Left cardiac atrium (tissue), 4 donors: ENCODE measurements at regions of chr7 and their contacts with region 1.

Region 1: GRCh38 chr7:136874238-136875032 is 6.0 kb downstream of the CHRM2 start:
- DNase-seq: no peak
- ATAC-seq: no peak

Region 2: DNA sequence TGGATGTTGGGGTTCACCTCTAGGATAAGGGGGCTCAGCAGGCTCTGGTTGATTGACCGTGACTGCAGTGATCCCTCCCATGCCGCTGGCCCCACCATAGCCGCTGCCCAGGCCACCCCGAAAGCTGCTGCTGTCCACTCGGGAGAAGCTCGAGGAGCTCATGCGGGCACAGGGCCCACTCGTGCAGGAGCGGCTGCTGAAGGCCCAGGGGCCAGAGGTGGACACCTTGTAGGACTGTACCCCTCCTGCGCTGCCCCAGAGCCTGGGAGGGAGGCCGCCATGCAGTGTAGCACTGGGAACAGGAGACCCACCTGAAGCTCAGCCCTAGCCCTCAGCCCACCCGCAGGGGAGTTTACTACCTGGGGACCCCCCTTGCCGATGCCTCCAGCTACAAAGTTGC is 64.0 kb after region 1 on chr7:
- intact Hi-C with region 1: loop called in 1 of 2 experiments (anchors 10 kb)
- DNase-seq: no peak
- ATAC-seq: peak in 1 of 2 donors; percentile 25

Region 3: DNA sequence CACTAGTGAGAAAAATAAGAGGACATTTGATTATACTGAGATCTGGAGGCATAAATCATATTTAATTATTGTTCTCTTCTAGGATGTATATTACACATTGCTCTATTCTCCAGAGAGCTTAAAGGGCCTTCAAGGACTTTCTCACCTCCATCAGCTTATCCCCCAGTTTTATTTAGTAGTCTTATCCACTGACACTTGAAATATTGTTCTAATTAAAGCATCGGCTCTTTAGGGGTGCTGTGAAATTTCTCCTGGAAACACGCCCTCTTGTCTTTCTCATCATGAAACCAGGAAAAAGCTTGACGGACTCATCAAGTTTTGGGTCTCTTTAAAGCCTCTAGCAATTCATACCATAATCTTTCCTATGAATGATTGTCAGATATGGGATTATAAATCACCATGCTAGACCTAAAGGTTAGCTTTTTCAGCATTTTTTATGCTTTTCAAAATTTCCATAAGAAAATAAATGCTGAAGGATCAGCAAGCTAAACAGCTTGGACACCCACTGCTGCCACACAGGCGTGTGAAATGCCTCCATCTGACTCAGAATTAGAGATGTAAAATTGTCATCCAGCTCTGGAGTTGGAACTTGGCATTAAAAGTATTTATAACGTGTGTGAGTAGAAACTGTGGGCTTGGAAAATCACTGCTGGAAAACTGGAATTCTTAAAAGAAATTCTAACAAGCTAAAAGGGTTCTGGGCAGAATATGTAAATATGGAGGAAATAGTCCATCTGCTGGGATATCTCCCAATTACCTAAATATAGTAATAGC is 210.4 kb after region 1 on chr7:
- intact Hi-C with region 1: loop called in 1 of 2 experiments (anchors 5 kb)
- DNase-seq: no peak
- ATAC-seq: peak in 1 of 2 donors; percentile 33